ENCODE measurements at regions of chr15 and their contacts with region 1.

Region 1: GRCh38 chr15:56929399-56929798 is 11.0 kb downstream of the TCF12 start:
- DNase-seq: no peak
- ATAC-seq: no peak
- H3K4me3 ChIP-seq: no peak overlapping the region
- H3K4me3 Mint-ChIP-seq: no peak overlapping the region
- H3K27ac ChIP-seq: no peak overlapping the region
- H3K27ac Mint-ChIP-seq: peak overlapping the region; percentile 79
- H3K4me1 ChIP-seq: peaks cover 3% of the 10 kb centered on the region
- H3K4me1 Mint-ChIP-seq: peaks cover 89% of the 10 kb centered on the region
- H3K27me3 ChIP-seq: no peaks in the 10 kb centered on the region
- H3K27me3 Mint-ChIP-seq: no peaks in the 10 kb centered on the region
- CTCF ChIP-seq: no peak

Region 2: DNA sequence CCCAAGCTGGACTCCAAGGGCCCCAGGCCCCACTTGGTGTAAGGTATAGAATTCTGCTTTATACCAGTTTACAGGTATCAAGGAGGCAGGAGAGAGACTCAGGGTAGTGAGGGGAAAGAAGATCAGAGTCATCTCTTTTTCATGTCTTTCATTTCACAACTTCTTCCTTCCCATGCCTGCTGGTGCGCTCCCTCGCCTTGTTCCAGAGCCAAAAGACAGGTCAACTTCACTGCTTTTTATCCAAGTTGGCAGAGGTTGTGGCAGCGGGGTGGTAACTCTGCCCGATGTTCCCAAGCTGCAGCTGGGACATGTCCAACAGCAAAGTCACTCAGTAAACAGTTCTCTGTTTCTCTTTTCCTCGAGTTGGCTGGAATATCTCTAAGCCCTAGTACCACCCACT is 97.3 kb before region 1 on chr15:
- CTCF ChIA-PET with region 1: no interaction called
- POLR2A ChIA-PET with region 1: no interaction called
- intact Hi-C with region 1: no loop called
- DNase-seq: no peak
- ATAC-seq: no peak
- H3K4me3 ChIP-seq: no peak overlapping the region
- H3K4me3 Mint-ChIP-seq: no peak overlapping the region
- H3K27ac ChIP-seq: no peak overlapping the region
- H3K27ac Mint-ChIP-seq: no peak overlapping the region
- H3K4me1 ChIP-seq: no peaks in the 10 kb centered on the region
- H3K4me1 Mint-ChIP-seq: no peaks in the 10 kb centered on the region
- H3K27me3 ChIP-seq: no peaks in the 10 kb centered on the region
- H3K27me3 Mint-ChIP-seq: no peaks in the 10 kb centered on the region
- CTCF ChIP-seq: no peak

Region 3: DNA sequence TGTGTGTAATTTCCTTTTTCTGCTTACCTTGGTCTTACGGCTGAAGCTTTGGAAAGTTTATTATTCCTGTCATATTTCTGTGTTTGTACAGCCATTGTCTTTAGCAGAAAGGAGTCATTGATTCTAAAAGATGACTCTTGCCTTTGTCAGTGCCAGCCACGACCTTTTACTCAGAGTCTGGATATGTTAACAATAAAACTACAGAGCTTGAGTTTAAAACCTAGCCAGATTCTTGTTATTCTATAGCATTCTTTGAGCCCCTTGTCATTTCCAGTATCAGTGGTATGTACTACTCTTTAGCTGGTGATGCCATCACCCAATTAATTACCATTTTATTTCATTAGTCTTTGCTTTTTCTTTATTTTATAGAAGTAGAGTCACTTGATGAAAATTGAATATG is 131.4 kb after region 1 on chr15:
- CTCF ChIA-PET with region 1: no interaction called
- POLR2A ChIA-PET with region 1: no interaction called
- intact Hi-C with region 1: loop called in 1 of 2 experiments (anchors 10 kb)
- DNase-seq: no peak
- ATAC-seq: no peak
- H3K4me3 ChIP-seq: no peak overlapping the region
- H3K4me3 Mint-ChIP-seq: no peak overlapping the region
- H3K27ac ChIP-seq: no peak overlapping the region
- H3K27ac Mint-ChIP-seq: no peak overlapping the region
- H3K4me1 ChIP-seq: peaks cover 5% of the 10 kb centered on the region
- H3K4me1 Mint-ChIP-seq: peaks cover 54% of the 10 kb centered on the region
- H3K27me3 ChIP-seq: no peaks in the 10 kb centered on the region
- H3K27me3 Mint-ChIP-seq: no peaks in the 10 kb centered on the region
- CTCF ChIP-seq: no peak